Natural killer cell (primary cell): ENCODE measurements at regions of chr17 and their contacts with region 1.

Region 1: GRCh38 chr17:5419356-5419958 is at the start of gene NUP88:
- DNase-seq: peak; percentile 95 to 98
- ATAC-seq: peak; percentile 87 to 96 (median 91)
- H3K4me3 ChIP-seq: peak within 1 kb of the TSS; percentile 93
- H3K4me3 Mint-ChIP-seq: peak within 1 kb of the TSS; percentile 99
- H3K27ac ChIP-seq: peak within 1 kb of the TSS; percentile 97
- H3K27ac Mint-ChIP-seq: peak within 1 kb of the TSS; percentile 97
- H3K4me1 ChIP-seq: peaks cover 26% of the 10 kb centered on the region
- H3K4me1 Mint-ChIP-seq: peaks cover 25 to 27% of the 10 kb centered on the region in 2 donors
- H3K27me3 ChIP-seq: no peaks in the 10 kb centered on the region
- H3K27me3 Mint-ChIP-seq: no peaks in the 10 kb centered on the region
- CTCF ChIP-seq: no peak
- total RNA-seq, gene NUP88: 112 to 136 (median 125) TPM

Region 2: GRCh38 chr17:4948931-4949320 is 470.5 kb before region 1 on chr17:
- intact Hi-C with region 1: loop called (anchors 5 kb)
- DNase-seq: peak; percentile 72 to 87
- ATAC-seq: peak; percentile 30 to 69 (median 58)
- H3K4me3 ChIP-seq: peak overlapping the region; percentile 99
- H3K4me3 Mint-ChIP-seq: peak overlapping the region; percentile 91
- H3K27ac ChIP-seq: peak overlapping the region; percentile 97
- H3K27ac Mint-ChIP-seq: peak overlapping the region; percentile 87 to 93
- H3K4me1 ChIP-seq: peaks cover 45% of the 10 kb centered on the region
- H3K4me1 Mint-ChIP-seq: peaks cover 45 to 52% of the 10 kb centered on the region in 2 donors
- H3K27me3 ChIP-seq: no peaks in the 10 kb centered on the region
- H3K27me3 Mint-ChIP-seq: peaks cover 0 to 2% of the 10 kb centered on the region in 2 donors
- CTCF ChIP-seq: no peak

Region 3: DNA sequence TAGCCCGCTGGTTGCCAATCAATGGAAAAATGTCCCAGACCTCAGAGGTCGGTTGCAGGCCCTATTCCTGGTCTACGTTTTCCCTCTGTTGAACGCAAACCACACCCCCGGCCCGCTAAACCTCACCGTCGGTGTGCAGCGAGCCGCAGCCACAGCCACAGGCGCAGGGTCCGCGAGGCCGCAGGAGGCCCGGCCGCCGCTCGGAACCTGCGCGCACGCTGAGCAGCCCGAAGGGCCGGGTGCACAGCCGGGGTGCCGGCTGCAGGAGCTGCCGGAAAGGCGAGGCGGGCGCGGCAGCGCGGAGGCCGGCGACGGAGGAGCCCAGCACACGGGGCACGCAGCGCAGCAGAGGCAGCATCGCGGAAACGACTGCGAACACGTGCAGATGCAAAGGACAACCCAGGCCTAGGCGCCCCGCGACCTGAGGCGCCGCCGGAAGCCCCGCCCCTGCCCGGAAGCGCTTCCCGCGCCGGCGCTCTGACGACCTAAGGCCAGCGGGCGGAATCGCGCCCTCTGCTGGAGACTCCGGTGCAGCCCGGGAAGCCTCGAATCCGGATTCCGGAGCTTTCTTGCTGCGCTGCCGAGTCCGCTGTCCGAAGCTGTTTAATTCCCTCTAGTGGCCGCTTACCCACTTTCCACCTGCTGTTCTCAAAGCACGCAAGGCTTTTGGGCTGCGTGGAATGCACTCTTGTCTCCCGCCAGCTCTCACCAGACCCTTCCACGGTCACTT is 19.4 kb after region 1 on chr17 and contains the start of gene C1QBP:
- intact Hi-C with region 1: loop called (anchors 1 kb)
- DNase-seq: peak; percentile 95 to 97
- ATAC-seq: peak; percentile 93 to 98 (median 95)
- H3K4me3 ChIP-seq: peak within 1 kb of the TSS; percentile 51
- H3K4me3 Mint-ChIP-seq: peak within 1 kb of the TSS; percentile 81
- H3K27ac ChIP-seq: peak within 1 kb of the TSS; percentile 70
- H3K27ac Mint-ChIP-seq: peak within 1 kb of the TSS; percentile 81 to 92
- H3K4me1 ChIP-seq: peaks cover 13% of the 10 kb centered on the region
- H3K4me1 Mint-ChIP-seq: peaks cover 19 to 27% of the 10 kb centered on the region in 2 donors
- H3K27me3 ChIP-seq: no peaks in the 10 kb centered on the region
- H3K27me3 Mint-ChIP-seq: no peaks in the 10 kb centered on the region
- CTCF ChIP-seq: peak; percentile 97
- total RNA-seq, gene C1QBP: 38.1 to 40.8 (median 40.0) TPM

Region 4: GRCh38 chr17:5486204-5487124 is 67.0 kb after region 1 on chr17 and contains the start of gene MIS12:
- intact Hi-C with region 1: loop called (anchors 1 kb)
- DNase-seq: peak; percentile 92 to 98
- ATAC-seq: peak; percentile 87 to 94 (median 87)
- H3K4me3 ChIP-seq: peak within 1 kb of the TSS; percentile 97
- H3K4me3 Mint-ChIP-seq: peak within 1 kb of the TSS; percentile 96
- H3K27ac ChIP-seq: peak within 1 kb of the TSS; percentile 100
- H3K27ac Mint-ChIP-seq: peak within 1 kb of the TSS; percentile 95 to 98
- H3K4me1 ChIP-seq: peaks cover 16% of the 10 kb centered on the region
- H3K4me1 Mint-ChIP-seq: peaks cover 28 to 43% of the 10 kb centered on the region in 2 donors
- H3K27me3 ChIP-seq: no peaks in the 10 kb centered on the region
- H3K27me3 Mint-ChIP-seq: no peaks in the 10 kb centered on the region
- CTCF ChIP-seq: no peak
- total RNA-seq, gene MIS12: 26.8 to 35.3 (median 29.3) TPM